ENCODE measurements at regions of chr4 and their contacts with region 1.

Region 1: DNA sequence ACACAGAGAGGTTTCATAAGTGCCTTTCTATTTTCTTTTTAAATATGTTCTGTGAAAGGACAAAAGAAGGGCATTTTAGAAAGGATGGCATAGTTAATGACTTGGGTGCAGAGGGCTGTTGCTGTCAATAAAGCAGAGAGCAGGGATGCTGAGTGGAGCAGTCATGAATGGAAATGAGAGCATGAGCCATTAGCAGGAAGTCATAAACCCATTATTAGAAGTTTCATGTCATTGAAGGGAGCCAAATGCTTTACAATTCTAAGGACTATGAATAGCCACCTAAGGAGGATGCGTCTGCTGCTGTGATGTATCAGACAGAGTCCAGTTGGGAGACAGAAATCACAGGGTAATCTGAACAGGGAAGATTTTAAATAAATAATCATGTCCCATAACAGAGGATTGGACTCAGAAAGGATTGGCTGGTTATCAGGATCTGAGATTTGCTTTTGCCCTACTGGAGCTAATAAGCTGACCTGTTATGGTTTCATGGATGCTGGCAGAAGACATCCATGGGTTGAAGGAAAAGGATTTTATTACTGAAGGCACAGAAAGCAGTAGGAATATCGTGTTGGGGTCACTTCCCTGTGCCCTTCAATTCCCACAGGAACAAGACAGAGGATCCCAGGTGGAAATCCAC is 47.5 kb upstream of the WDR19 start:
- DNase-seq: no peak
- ATAC-seq: no peak

Region 2: GRCh38 chr4:38759113-38759789 is 375.6 kb before region 1 on chr4:
- intact Hi-C with region 1: loop called (anchors 10 kb)
- DNase-seq: peak; percentile 78
- ATAC-seq: peak; percentile 85

Region 3: DNA sequence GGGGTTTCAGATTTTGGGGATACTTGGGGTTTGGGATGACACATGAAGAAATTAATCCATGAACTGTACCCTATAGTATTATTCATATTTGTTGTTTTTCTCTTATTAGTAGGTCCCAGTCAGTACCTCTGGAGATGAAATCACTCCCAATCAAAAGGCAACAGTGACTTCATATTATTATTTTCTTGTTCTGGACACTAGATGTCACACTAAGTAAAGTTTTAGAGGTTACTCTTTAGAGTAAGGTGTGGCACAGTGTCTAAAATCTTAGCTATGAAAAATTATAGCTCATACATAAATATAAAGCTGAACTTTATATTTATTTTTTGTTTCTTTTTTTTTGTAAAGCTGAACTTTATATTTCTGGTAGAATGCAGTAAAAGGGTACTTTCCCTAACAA is 232.1 kb before region 1 on chr4:
- intact Hi-C with region 1: loop called (anchors 5 kb)
- DNase-seq: no peak
- ATAC-seq: peak; percentile 61

Measured in Right ventricle myocardium inferior (tissue), 1 donor.